CD14-positive monocyte (primary cell): ENCODE measurements at regions of chr3 and their contacts with region 1.

Region 1: GRCh38 chr3:128895843-128896697 is 16.6 kb downstream of the ACAD9 start:
- DNase-seq: no peak
- H3K4me3 ChIP-seq: no peak overlapping the region
- H3K4me3 Mint-ChIP-seq: no peak overlapping the region
- H3K27ac ChIP-seq: peak overlapping the region in 1 of 2 donors; percentile 26
- H3K27ac Mint-ChIP-seq: peak overlapping the region in 3 of 7 donors; percentile 15 to 63 (median 55)
- H3K4me1 ChIP-seq: no peaks in the 10 kb centered on the region
- H3K4me1 Mint-ChIP-seq: no peaks in the 10 kb centered on the region
- H3K27me3 ChIP-seq: no peaks in the 10 kb centered on the region
- H3K27me3 Mint-ChIP-seq: no peaks in the 10 kb centered on the region
- CTCF ChIP-seq: no peak

Region 2: GRCh38 chr3:128864351-128864811 is 31.7 kb before region 1 on chr3:
- intact Hi-C with region 1: loop called in 1 of 2 experiments (anchors 2 kb)
- DNase-seq: peak in 1 of 3 donors; percentile 11
- H3K4me3 ChIP-seq: peak overlapping the region in 1 of 3 experiments; percentile 58
- H3K4me3 Mint-ChIP-seq: peak overlapping the region; percentile 63 to 84
- H3K27ac ChIP-seq: peak overlapping the region in 1 of 2 donors; percentile 72
- H3K27ac Mint-ChIP-seq: peak overlapping the region; percentile 37 to 88 (median 77)
- H3K4me1 ChIP-seq: peaks cover 33 to 34% of the 10 kb centered on the region in 2 donors
- H3K4me1 Mint-ChIP-seq: peaks cover 41% of the 10 kb centered on the region
- H3K27me3 ChIP-seq: no peaks in the 10 kb centered on the region
- H3K27me3 Mint-ChIP-seq: peaks cover 0 to 3% (median 0%) of the 10 kb centered on the region in 3 donors
- CTCF ChIP-seq: no peak

Region 3: DNA sequence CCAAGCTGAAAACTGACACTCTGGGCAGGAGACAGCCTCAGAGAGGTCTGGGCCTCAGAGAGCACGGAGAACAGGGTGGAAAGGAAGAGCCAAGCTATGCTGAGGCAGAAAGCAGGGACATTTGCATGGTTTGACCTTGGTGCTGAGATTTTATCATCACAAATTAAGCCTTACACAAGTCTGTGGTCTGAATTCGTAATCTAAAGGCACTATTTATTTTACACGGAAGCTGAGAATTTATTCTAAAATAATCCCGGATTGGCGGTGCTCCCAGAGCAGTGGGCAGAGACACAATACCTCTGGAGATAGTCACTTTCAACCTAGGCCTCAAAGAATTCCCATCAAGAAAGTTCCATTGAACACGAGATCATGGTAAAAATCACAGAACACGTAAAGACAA is 50.3 kb after region 1 on chr3:
- intact Hi-C with region 1: no loop called
- DNase-seq: no peak
- H3K4me3 ChIP-seq: no peak overlapping the region
- H3K4me3 Mint-ChIP-seq: no peak overlapping the region
- H3K27ac ChIP-seq: no peak overlapping the region
- H3K27ac Mint-ChIP-seq: no peak overlapping the region
- H3K4me1 ChIP-seq: no peaks in the 10 kb centered on the region
- H3K4me1 Mint-ChIP-seq: no peaks in the 10 kb centered on the region
- H3K27me3 ChIP-seq: no peaks in the 10 kb centered on the region
- H3K27me3 Mint-ChIP-seq: peaks cover 0 to 3% (median 0%) of the 10 kb centered on the region in 3 donors
- CTCF ChIP-seq: no peak